ENCODE measurements at regions of chr16 and their contacts with region 1.

Region 1: GRCh38 chr16:85821441-85822135 is 22.1 kb downstream of the COX4I1 start:
- DNase-seq: peak; percentile 95
- H3K4me3 ChIP-seq: no peak overlapping the region
- H3K27ac ChIP-seq: no peak overlapping the region
- H3K4me1 ChIP-seq: peaks cover 7 to 23% (median 15%) of the 10 kb centered on the region in 4 donors
- H3K27me3 ChIP-seq: no peaks in the 10 kb centered on the region
- CTCF ChIP-seq: peak; percentile 98 to 99 (median 98)
- EP300 ChIP-seq: no peak
- POLR2A ChIP-seq: no peak

Region 2: DNA sequence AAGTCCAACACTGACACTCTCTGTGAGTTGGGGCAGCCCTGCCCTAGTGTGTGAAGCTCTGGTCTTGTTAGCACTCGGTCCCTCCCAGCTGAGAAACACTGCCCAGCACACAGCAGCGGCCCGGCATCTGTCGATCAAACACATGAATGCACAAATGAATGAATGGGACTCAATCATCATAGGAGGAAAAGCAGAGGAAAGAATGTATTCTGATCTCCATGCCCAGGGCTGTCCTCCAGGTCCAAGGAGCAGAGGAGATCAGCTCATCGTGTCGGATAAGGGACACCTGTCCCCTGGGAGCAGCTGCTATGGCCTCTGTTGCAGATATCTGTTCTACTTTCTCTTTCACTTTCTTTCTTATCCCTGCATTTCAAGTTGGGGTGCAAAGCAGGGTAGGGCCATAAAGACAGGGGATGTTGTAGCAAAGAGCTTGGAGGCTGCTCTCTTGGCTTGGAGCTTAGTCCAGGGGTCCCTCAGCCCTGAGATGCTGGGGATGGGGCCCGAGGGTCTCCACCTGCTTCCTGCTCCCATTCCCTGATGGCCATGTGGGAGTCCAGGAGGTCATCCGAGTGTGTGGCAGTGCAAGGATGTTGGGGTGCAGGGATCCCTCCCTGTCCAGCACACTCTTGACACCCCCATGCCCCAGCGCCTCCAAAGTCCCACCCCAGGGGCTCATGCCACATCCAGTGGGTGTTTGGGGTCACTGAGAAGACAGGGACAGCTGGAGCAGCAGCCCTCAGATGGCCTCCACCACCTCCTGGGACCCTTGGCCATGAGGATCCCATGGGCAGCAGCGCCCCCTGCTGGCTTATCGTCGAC is 165.6 kb after region 1 on chr16:
- intact Hi-C with region 1: loop called (anchors 1 kb)
- DNase-seq: no peak
- H3K4me3 ChIP-seq: peak overlapping the region in 2 of 4 donors; percentile 17 to 30
- H3K27ac ChIP-seq: no peak overlapping the region
- H3K4me1 ChIP-seq: peaks cover 0 to 5% (median 4%) of the 10 kb centered on the region in 4 donors
- H3K27me3 ChIP-seq: peaks cover 0 to 26% (median 0%) of the 10 kb centered on the region in 4 donors
- CTCF ChIP-seq: peak; percentile 14 to 69 (median 64)
- EP300 ChIP-seq: no peak
- POLR2A ChIP-seq: no peak

Region 3: GRCh38 chr16:86016201-86016871 is 194.7 kb after region 1 on chr16:
- intact Hi-C with region 1: loop called (anchors 1 kb)
- DNase-seq: no peak
- H3K4me3 ChIP-seq: no peak overlapping the region
- H3K27ac ChIP-seq: no peak overlapping the region
- H3K4me1 ChIP-seq: peaks cover 6 to 32% (median 29%) of the 10 kb centered on the region in 4 donors
- H3K27me3 ChIP-seq: no peaks in the 10 kb centered on the region
- CTCF ChIP-seq: peak; percentile 66 to 79 (median 77)
- EP300 ChIP-seq: no peak
- POLR2A ChIP-seq: no peak

Region 4: GRCh38 chr16:86059253-86060171 is 237.9 kb after region 1 on chr16:
- intact Hi-C with region 1: no loop called
- DNase-seq: no peak
- H3K4me3 ChIP-seq: no peak overlapping the region
- H3K27ac ChIP-seq: peak overlapping the region; percentile 44 to 86 (median 70)
- H3K4me1 ChIP-seq: peaks cover 15 to 48% (median 39%) of the 10 kb centered on the region in 4 donors
- H3K27me3 ChIP-seq: no peaks in the 10 kb centered on the region
- CTCF ChIP-seq: no peak
- EP300 ChIP-seq: no peak
- POLR2A ChIP-seq: no peak